Psoas muscle (tissue), 8 donors: ENCODE measurements at regions of chr3 and their contacts with region 1.

Region 1: DNA sequence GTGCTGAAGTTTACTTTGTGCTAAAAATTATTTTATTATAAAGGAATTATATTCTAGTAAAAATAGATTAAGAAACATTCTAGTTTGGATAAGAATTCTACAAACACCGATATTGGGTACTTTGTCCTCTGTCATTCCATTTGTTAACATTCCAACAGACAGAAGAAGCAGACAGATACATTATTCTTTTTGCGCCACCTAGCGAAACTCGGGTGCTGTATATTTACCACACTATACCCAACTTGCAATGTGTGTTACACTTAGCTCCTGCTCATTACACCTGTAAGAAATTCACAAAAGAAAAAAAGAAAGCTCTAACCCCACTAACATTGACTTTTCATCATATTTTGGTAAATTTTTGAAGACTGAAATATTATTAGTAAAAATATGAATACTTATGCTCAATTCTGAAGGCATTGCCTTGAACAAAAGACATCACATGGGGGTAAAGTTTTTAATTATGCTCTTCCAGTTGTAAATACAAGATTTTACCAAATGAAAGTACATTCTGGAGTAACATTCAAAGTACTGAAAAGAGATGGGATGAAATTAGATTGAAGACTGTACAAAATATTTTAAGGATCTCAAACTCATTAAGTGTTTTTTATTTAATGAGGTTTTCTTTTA is 136.5 kb upstream of the MLF1 start:
- DNase-seq: peak in 1 of 2 donors; percentile 10
- ATAC-seq: peak; percentile 57 to 83 (median 72)
- H3K4me3 ChIP-seq: no peak overlapping the region
- H3K27ac ChIP-seq: no peak overlapping the region
- H3K4me1 ChIP-seq: no peaks in the 10 kb centered on the region
- H3K27me3 ChIP-seq: no peaks in the 10 kb centered on the region
- CTCF ChIP-seq: peak; percentile 69

Region 2: GRCh38 chr3:157606011-157606851 is 828.3 kb before region 1 on chr3:
- intact Hi-C with region 1: loop called in 1 of 2 experiments (anchors 5 kb)
- DNase-seq: peak; percentile 40 to 65
- ATAC-seq: peak; percentile 37 to 80 (median 67)
- H3K4me3 ChIP-seq: no peak overlapping the region
- H3K27ac ChIP-seq: no peak overlapping the region
- H3K4me1 ChIP-seq: no peaks in the 10 kb centered on the region
- H3K27me3 ChIP-seq: no peaks in the 10 kb centered on the region
- CTCF ChIP-seq: peak; percentile 65

Region 3: GRCh38 chr3:158094235-158095110 is 340.1 kb before region 1 on chr3:
- intact Hi-C with region 1: loop called in 1 of 2 experiments (anchors 5 kb)
- DNase-seq: no peak
- ATAC-seq: no peak
- H3K4me3 ChIP-seq: peak overlapping the region; percentile 4
- H3K27ac ChIP-seq: no peak overlapping the region
- H3K4me1 ChIP-seq: peaks cover 11% of the 10 kb centered on the region
- H3K27me3 ChIP-seq: peaks cover 7 to 72% (median 33%) of the 10 kb centered on the region in 3 donors
- CTCF ChIP-seq: no peak

Region 4: GRCh38 chr3:159252772-159253384 is 818.4 kb after region 1 on chr3:
- intact Hi-C with region 1: no loop called
- DNase-seq: no peak
- ATAC-seq: no peak
- H3K4me3 ChIP-seq: no peak overlapping the region
- H3K27ac ChIP-seq: no peak overlapping the region
- H3K4me1 ChIP-seq: no peaks in the 10 kb centered on the region
- H3K27me3 ChIP-seq: no peaks in the 10 kb centered on the region
- CTCF ChIP-seq: peak; percentile 34